ENCODE measurements at regions of chr3 and their contacts with region 1.

Region 1: GRCh38 chr3:16048435-16049318 is 125.8 kb upstream of the GALNT15 start:
- DNase-seq: no peak
- ATAC-seq: peak; percentile 92

Region 2: GRCh38 chr3:16112910-16113504 is 64.3 kb after region 1 on chr3:
- intact Hi-C with region 1: loop called (anchors 5 kb)
- DNase-seq: no peak
- ATAC-seq: peak; percentile 50

Region 3: GRCh38 chr3:16177962-16178627 is 129.4 kb after region 1 on chr3:
- intact Hi-C with region 1: loop called (anchors 1 kb)
- DNase-seq: peak; percentile 89
- ATAC-seq: peak; percentile 72

Region 4: DNA sequence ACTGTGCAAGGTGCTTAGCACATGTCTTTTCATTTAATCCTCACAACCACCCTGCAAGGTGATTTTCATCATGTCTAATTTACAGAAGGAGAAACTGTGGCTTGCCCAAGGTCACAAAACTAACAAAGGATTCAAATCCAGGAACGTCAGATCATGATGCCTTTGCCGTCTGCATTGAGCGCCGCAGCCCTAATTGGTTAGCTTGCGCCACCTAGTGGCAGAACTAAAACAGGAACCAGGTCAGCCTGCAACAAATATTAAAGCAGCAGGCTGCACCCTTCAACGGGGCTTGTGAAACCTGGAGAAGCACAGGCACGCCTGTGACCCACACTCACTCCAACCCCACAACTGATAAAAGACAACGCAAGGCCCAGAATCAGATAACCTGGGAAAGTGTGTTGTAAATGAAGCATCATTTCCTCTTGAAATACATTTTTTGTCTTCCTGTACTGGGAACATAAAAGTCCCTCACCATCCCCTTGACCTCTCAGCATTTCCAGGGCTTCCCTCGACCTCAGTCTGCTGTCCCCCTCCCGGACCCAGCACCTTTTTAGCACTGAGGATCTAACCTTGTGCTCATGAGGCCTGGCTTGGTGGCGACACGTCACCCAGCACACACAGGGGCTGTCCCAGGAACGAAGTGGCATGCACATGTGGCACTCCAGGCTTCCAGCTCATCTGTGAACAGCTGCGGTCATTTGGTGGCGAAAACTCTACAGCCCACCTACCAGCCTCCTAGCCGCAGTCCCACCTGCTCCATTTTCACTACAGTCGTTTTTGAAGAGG is 198.8 kb after region 1 on chr3:
- intact Hi-C with region 1: loop called (anchors 1 kb)
- DNase-seq: peak; percentile 83
- ATAC-seq: peak; percentile 60

Region 5: GRCh38 chr3:16550676-16551341 is 502.1 kb after region 1 on chr3:
- intact Hi-C with region 1: loop called (anchors 5 kb)
- DNase-seq: no peak
- ATAC-seq: peak; percentile 82

Measured in Right ventricle myocardium inferior (tissue), 1 donor.